ENCODE measurements at regions of chrX and their contacts with region 1.

Region 1: GRCh38 chrX:12946838-12947544 is 27.9 kb upstream of the TMSB4X start:
- DNase-seq: peak; percentile 79
- H3K4me3 Mint-ChIP-seq: peak overlapping the region; percentile 13
- H3K27ac Mint-ChIP-seq: peak overlapping the region; percentile 76
- H3K4me1 Mint-ChIP-seq: peaks cover 55% of the 10 kb centered on the region
- H3K27me3 Mint-ChIP-seq: no peaks in the 10 kb centered on the region

Region 2: GRCh38 chrX:12741439-12741838 is 205.6 kb before region 1 on chrX:
- CTCF ChIA-PET with region 1: no interaction called
- POLR2A ChIA-PET with region 1: no interaction called
- DNase-seq: no peak
- H3K4me3 Mint-ChIP-seq: no peak overlapping the region
- H3K27ac Mint-ChIP-seq: no peak overlapping the region
- H3K4me1 Mint-ChIP-seq: no peaks in the 10 kb centered on the region
- H3K27me3 Mint-ChIP-seq: no peaks in the 10 kb centered on the region

Region 3: DNA sequence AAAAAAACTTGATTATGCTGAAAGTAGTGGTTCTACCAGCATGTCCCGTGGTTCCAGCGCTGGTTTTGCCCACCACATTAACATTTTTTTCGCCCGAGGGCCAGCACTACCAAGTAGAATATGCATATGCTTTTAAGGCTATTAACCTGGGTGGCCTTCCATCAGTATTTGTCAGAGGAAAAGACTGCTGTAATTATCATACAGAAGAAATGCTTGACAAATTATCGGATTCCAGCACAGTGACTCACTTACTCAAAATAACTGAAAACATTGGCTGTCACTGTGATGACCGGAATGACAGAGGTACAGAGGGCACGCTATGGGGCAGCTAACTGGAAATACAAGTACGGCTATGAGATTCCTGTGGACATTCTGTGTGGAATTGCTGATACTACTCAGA is 121.2 kb before region 1 on chrX:
- CTCF ChIA-PET with region 1: no interaction called
- POLR2A ChIA-PET with region 1: no interaction called
- DNase-seq: no peak
- H3K4me3 Mint-ChIP-seq: no peak overlapping the region
- H3K27ac Mint-ChIP-seq: no peak overlapping the region
- H3K4me1 Mint-ChIP-seq: peaks cover 2% of the 10 kb centered on the region
- H3K27me3 Mint-ChIP-seq: peaks cover 9% of the 10 kb centered on the region

Region 4: GRCh38 chrX:12843668-12844279 is 103.2 kb before region 1 on chrX:
- CTCF ChIA-PET with region 1: no interaction called
- POLR2A ChIA-PET with region 1: no interaction called
- DNase-seq: peak; percentile 6
- H3K4me3 Mint-ChIP-seq: peak overlapping the region; percentile 56
- H3K27ac Mint-ChIP-seq: peak overlapping the region; percentile 98
- H3K4me1 Mint-ChIP-seq: peaks cover 22% of the 10 kb centered on the region
- H3K27me3 Mint-ChIP-seq: no peaks in the 10 kb centered on the region

Region 5: DNA sequence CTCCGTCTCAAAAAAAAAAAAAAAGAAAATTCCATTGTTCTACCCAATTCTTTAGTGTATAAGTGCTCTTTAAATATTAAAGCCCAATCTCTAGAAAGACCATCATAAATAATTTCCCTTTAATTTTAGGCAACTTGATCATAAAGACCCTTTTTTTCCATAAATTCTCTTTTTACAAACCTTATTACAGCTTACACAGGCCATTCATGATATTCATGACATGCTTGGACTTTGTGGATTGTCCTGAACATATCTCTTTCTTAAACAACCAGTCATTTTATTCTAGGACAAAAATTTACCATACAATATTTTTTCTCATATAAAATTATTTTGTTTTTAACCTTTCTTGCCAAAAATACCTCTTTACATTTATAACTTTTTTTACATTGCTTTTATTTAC is 10.0 kb before region 1 on chrX:
- CTCF ChIA-PET with region 1: interaction called, 14 read pairs
- POLR2A ChIA-PET with region 1: no interaction called
- DNase-seq: no peak
- H3K4me3 Mint-ChIP-seq: no peak overlapping the region
- H3K27ac Mint-ChIP-seq: no peak overlapping the region
- H3K4me1 Mint-ChIP-seq: no peaks in the 10 kb centered on the region
- H3K27me3 Mint-ChIP-seq: no peaks in the 10 kb centered on the region

Region 6: DNA sequence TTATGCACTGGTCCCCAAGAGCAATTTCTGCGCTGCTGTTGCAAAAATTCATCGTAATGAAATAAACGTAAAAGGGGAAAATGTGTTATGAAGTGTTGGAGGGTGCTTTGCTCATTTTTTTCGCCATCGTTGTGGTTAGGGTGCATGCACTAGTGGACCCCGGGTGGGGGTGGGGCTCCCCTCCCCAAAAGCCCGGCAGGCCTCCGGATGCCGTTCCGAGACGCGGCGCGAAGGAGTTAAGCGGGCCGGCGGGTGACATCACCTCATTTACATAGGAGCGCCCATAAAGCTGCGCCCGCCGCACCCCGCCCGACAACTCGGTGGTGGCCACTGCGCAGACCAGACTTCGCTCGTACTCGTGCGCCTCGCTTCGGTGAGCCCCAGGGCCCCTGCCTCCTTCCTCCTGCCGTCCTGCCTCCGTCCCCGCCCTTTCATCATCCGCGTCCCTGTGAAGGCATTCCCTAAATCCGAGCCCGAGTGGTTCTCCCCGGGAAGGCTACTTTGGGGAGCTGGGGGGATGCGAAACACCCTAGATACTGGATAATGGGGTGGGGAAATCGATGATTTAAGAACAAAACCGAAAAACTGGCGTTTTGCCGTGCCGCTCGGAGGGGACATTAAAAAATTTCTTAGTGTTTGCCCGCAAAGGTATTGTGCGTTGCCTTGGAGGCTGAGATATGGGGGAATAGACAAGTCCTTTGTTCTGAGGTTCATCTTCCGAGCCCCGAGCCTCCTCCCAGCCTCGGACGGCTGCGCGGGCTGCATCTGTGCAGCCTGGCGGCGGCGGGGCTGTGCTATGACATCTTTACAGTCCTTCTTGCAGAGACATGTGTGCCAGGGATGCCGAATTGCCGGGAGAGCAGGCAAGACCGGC is 28.0 kb after region 1 on chrX and contains the start of gene TMSB4X:
- CTCF ChIA-PET with region 1: interaction called, 37 read pairs
- POLR2A ChIA-PET with region 1: interaction called, 6 read pairs
- DNase-seq: peak; percentile 85
- H3K4me3 Mint-ChIP-seq: peak within 1 kb of the TSS; percentile 96
- H3K27ac Mint-ChIP-seq: peak within 1 kb of the TSS; percentile 99
- H3K4me1 Mint-ChIP-seq: peaks cover 30% of the 10 kb centered on the region
- H3K27me3 Mint-ChIP-seq: no peaks in the 10 kb centered on the region
- total RNA-seq, gene TMSB4X: 9,113 to 9,418 TPM

Region 7: DNA sequence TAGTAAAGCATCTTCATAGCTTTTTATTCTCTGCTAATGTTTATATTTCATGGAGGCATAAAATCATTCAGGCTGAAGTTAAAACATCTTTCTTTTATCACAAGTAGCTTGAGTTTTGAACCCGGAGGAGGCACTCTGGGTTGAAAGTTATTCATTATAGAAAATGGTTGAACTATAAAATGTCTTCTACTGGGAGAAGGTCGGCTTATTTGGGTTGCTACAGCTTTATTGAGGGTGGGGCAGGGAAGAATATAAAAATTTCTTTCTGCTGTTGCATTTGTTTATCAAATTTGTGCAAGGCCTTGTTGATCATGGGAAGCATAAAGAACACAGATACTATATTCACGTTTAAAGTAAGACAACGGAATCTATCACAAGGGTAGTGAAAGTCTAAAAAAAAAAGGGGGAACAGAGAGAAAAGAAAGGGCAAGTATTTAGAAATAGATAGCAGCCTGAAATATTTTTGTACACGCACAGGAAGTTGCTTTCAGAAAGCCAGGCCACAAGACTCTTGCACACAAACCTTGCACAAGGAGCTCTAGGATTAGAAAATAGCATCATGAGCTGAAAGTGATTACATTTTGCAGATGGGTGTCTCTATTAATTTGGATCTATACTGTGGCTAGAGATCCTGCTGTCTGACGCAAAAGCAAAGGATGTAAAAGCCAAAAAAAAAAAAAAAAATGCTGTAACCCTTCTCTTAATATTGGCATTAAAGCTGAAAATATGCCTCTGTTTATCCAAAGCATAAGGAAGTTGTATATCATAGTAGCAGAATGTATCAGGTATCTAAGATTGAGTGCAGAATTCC is 134.6 kb after region 1 on chrX:
- CTCF ChIA-PET with region 1: interaction called, 137 read pairs
- POLR2A ChIA-PET with region 1: no interaction called
- DNase-seq: peak; percentile 38
- H3K4me3 Mint-ChIP-seq: peak overlapping the region; percentile 59
- H3K27ac Mint-ChIP-seq: peak overlapping the region; percentile 98
- H3K4me1 Mint-ChIP-seq: peaks cover 87% of the 10 kb centered on the region
- H3K27me3 Mint-ChIP-seq: no peaks in the 10 kb centered on the region

Region 8: DNA sequence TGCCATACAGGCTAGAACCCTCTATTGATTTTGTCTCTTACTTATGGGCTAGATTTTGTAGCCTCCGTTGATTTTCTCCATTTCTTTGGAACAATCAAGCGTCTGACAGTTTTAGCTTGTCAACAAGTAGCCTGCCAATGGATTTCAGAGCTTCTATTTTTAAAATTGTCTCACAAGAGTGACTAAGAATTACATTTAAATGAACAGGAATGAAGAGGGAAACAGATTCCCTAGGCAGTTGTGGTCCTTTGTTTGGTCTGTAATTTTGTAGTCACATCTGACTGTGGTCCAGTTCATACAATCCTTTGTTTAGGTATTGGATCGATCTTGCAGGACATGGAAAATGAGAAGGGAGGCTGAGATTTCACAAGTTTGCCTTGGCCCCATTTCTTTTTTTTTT is 535.8 kb after region 1 on chrX:
- CTCF ChIA-PET with region 1: interaction called, 43 read pairs
- POLR2A ChIA-PET with region 1: no interaction called
- DNase-seq: no peak
- H3K4me3 Mint-ChIP-seq: no peak overlapping the region
- H3K27ac Mint-ChIP-seq: no peak overlapping the region
- H3K4me1 Mint-ChIP-seq: peaks cover 22% of the 10 kb centered on the region
- H3K27me3 Mint-ChIP-seq: no peaks in the 10 kb centered on the region

Measured in activated CD4-positive, alpha-beta T cell treated with anti-CD3 and anti-CD28 coated beads, Interleukin-2, amount 10 ng/mL, durations not matched to agents 7 days and 5 days (primary cell).